ENCODE measurements at regions of chr1 and their contacts with region 1.

Region 1: DNA sequence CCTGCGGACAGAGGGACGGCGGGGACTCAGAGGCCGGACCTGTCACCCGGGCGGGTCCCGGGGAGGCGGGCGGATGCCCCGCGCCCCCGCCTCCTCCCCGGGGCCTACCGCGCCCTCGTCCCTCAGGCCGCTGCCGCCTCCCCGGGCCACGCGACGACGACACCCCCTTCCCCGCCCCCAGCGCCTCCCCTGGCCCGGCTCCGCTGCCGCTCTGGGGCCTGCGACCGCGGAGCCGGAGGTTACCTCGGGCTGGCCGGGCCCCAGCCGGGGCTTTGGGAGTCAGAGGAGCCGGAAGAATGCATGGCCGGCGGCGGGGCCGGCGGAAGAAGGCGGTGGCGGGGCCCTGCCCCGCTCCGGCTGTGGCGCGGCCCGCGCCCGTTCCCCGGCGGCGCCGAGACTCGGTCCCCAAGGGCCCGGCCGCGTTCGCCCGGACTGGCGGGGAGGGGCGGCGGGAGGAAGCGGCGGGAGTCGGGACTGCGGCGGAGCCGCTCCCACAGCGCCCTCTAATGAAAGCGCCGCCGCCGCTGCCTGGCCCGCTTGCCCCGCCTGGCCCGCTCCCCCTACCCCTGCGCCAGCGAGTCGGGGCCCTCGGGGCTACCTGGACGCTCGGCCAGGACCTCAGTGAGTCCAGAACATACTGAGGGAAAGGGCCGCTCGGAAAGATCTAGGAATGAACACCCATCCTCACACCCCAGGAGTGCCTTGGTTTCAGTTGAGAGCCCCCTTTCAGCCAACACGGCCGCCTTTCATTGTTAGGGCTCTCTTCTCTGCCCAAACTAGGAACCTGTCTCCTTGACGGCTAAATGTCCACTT is at the start of gene LPGAT1:
- DNase-seq: peak; percentile 62 to 78 (median 64)
- H3K4me3 ChIP-seq: peak within 1 kb of the TSS; percentile 43 to 69
- H3K4me3 Mint-ChIP-seq: peak within 1 kb of the TSS; percentile 90 to 95 (median 92)
- H3K27ac ChIP-seq: peak within 1 kb of the TSS; percentile 72
- H3K27ac Mint-ChIP-seq: peak within 1 kb of the TSS; percentile 86 to 96 (median 92)
- H3K4me1 ChIP-seq: peaks cover 68% of the 10 kb centered on the region
- H3K4me1 Mint-ChIP-seq: peaks cover 52 to 76% (median 59%) of the 10 kb centered on the region in 4 donors
- H3K27me3 ChIP-seq: no peaks in the 10 kb centered on the region
- H3K27me3 Mint-ChIP-seq: no peaks in the 10 kb centered on the region
- total RNA-seq, gene LPGAT1: 29.7 to 31.1 TPM

Region 2: GRCh38 chr1:211578640-211579433 is 251.7 kb before region 1 on chr1 and contains the start of gene SLC30A1:
- CTCF ChIA-PET with region 1: no interaction called
- POLR2A ChIA-PET with region 1: no interaction called
- intact Hi-C with region 1: loop called (anchors 5 kb)
- DNase-seq: peak; percentile 99
- H3K4me3 ChIP-seq: peak within 1 kb of the TSS; percentile 72 to 86
- H3K4me3 Mint-ChIP-seq: peak within 1 kb of the TSS; percentile 90 to 96 (median 92)
- H3K27ac ChIP-seq: peak within 1 kb of the TSS; percentile 76
- H3K27ac Mint-ChIP-seq: peak within 1 kb of the TSS; percentile 86 to 97 (median 93)
- H3K4me1 ChIP-seq: peaks cover 42% of the 10 kb centered on the region
- H3K4me1 Mint-ChIP-seq: peaks cover 23 to 56% (median 36%) of the 10 kb centered on the region in 4 donors
- H3K27me3 ChIP-seq: no peaks in the 10 kb centered on the region
- H3K27me3 Mint-ChIP-seq: peaks cover 0 to 2% of the 10 kb centered on the region in 2 donors
- total RNA-seq, gene SLC30A1: 10.1 to 10.6 TPM

Region 3: DNA sequence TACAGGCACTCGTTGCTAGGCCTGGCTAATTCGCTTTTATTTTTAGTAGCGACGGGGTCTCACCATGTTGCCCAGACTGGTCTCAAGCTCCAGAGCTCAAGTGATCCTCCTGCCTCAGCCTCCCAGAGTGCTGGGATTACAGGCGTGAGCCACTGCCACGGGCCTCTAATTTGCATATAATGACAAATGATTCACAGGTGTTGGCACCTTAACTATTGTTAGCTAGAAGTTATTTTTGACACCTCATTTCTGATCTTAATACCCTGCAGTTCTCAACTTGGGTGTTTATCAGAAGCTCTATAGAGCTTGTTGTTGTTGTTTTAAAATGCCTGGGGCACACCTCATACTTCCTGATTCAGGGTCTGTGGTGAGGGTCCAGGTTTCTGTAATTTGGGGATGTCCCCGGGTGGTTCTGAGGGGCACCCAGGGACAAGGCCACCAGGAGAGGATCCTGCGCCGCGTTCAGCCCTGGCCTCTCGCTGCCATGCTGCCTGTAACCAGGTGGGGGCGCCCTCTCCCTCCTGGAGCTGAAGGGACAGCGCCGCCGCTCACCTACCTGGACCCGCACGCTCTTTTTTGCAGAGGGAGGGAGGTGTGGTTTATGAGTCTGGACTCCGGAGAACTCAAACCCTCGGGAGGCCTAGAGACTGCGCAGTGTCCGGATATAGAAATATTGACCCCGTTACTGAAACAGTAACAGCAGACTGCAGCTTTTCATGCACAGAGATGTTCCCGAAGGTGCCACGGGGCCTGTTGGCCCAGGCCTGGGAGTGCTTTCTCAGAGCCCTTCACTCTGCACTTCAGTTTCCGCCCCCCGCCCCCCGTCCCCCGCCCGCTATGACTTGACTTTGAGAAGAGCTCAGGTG is 132.1 kb before region 1 on chr1:
- CTCF ChIA-PET with region 1: interaction called, 6 read pairs
- POLR2A ChIA-PET with region 1: no interaction called
- intact Hi-C with region 1: loop called (anchors 1 kb)
- DNase-seq: peak; percentile 72 to 81 (median 73)
- H3K4me3 ChIP-seq: peak overlapping the region in 1 of 2 donors; percentile 30
- H3K4me3 Mint-ChIP-seq: peak overlapping the region; percentile 66 to 82 (median 78)
- H3K27ac ChIP-seq: no peak overlapping the region
- H3K27ac Mint-ChIP-seq: no peak overlapping the region
- H3K4me1 ChIP-seq: peaks cover 21% of the 10 kb centered on the region
- H3K4me1 Mint-ChIP-seq: peaks cover 8 to 26% (median 19%) of the 10 kb centered on the region in 4 donors
- H3K27me3 ChIP-seq: no peaks in the 10 kb centered on the region
- H3K27me3 Mint-ChIP-seq: peaks cover 0 to 3% of the 10 kb centered on the region in 2 donors

Region 4: GRCh38 chr1:211842518-211842917 is 12.0 kb after region 1 on chr1:
- CTCF ChIA-PET with region 1: interaction called, 6 read pairs
- POLR2A ChIA-PET with region 1: interaction called, 7 read pairs
- intact Hi-C with region 1: loop called (anchors 1 kb)
- DNase-seq: no peak
- H3K4me3 ChIP-seq: peak overlapping the region in 1 of 2 donors; percentile 6
- H3K4me3 Mint-ChIP-seq: peak overlapping the region in 5 of 8 donors; percentile 4 to 75 (median 69)
- H3K27ac ChIP-seq: no peak overlapping the region
- H3K27ac Mint-ChIP-seq: peak overlapping the region; percentile 36 to 94 (median 70)
- H3K4me1 ChIP-seq: peaks cover 20% of the 10 kb centered on the region
- H3K4me1 Mint-ChIP-seq: peaks cover 19 to 36% (median 25%) of the 10 kb centered on the region in 4 donors
- H3K27me3 ChIP-seq: no peaks in the 10 kb centered on the region
- H3K27me3 Mint-ChIP-seq: no peaks in the 10 kb centered on the region

Region 5: DNA sequence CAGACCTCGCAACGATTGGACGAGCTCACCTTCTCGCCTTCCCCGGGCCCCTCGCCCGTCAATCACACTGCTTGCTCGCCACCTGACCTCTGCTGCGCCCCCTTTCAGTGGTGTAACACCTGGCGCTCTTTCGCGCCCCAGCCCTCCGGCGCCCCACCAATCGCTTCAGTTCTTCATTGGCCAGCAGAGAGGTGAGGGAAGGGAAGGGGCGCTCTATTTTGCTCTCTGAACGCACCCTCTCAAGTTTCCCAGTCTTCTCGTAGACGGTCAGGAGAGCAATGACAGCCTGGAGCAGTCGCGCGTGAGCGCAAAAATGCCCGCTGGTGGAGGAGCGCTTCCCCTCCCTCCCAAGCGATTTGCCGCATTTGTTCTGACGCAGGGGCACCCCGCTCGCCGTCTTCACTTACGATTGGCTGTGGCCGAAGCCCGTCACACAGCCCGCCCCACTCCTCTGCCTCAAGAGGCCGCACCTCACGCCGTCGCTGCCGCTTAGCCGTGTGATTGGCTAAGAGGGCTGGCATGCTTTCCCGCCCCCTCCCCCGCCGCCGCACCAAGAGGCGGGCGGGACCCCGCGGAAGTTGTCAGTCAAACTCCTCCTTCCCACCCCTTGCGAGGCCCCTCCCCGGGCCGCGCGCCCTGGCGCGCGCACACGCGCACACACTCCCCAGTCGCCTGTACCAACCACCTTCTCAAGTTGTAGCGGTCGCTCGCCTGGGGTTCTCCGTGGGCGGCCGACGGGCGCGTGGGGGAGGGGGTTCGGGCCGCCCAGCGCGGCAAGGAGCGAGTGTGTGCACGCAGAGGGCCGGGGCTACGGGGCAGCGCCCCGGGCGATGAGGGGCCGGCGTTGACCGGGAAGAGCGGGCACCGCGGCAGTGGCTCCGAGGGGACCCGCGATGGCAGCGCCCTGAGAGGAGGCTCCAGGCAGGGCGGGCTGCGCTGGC is 454.5 kb after region 1 on chr1 and contains the start of gene PPP2R5A:
- CTCF ChIA-PET with region 1: no interaction called
- POLR2A ChIA-PET with region 1: interaction called, 3 read pairs
- intact Hi-C with region 1: loop called (anchors 2 kb)
- DNase-seq: peak; percentile 98 to 99 (median 99)
- H3K4me3 ChIP-seq: peak within 1 kb of the TSS; percentile 85 to 99
- H3K4me3 Mint-ChIP-seq: peak within 1 kb of the TSS; percentile 99 to 100 (median 100)
- H3K27ac ChIP-seq: peak within 1 kb of the TSS; percentile 92
- H3K27ac Mint-ChIP-seq: peak within 1 kb of the TSS; percentile 94 to 99 (median 99)
- H3K4me1 ChIP-seq: peaks cover 34% of the 10 kb centered on the region
- H3K4me1 Mint-ChIP-seq: peaks cover 26 to 49% (median 37%) of the 10 kb centered on the region in 4 donors
- H3K27me3 ChIP-seq: no peaks in the 10 kb centered on the region
- H3K27me3 Mint-ChIP-seq: no peaks in the 10 kb centered on the region
- total RNA-seq, gene PPP2R5A: 53.8 to 55.0 TPM

Region 6: DNA sequence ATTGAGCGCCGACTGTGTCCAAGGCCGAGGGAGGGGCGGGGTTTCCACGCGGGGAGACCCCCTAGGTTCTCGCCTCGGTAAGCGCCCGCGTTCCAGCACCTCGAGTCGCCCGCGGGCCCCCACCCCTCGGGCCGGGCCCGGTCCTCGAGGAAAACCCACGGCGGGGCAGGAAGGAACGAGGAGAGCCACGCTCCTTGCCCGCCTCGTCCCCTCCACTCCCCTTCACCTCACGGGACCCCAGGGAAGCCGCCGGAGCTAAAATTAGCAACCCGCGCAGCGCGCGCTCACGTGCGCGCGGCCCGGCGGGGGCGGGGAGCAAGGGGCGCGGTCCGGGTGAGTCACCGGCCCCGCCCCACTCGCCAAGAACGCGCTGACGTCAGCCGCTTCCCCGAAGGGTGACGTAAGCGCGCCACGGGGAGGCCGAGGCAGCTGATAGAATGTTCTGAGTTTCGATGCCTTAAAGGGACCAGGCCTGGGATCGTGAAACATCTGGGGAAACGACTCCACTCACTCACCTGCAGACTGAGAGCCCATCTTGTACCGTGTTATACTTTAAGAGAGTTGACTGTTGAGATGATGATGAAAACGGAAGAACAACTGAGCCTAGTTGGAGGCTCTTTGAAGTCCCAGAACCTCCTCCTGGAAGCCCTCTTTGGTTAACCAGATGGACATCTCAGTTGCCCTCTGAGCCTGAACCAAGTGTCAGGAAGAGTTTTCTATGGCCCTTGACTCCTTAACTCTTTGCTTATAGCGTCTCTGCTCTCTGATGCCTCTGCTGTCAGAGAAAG is 728.4 kb after region 1 on chr1:
- CTCF ChIA-PET with region 1: no interaction called
- POLR2A ChIA-PET with region 1: no interaction called
- intact Hi-C with region 1: loop called (anchors 5 kb)
- DNase-seq: peak; percentile 90 to 92 (median 91)
- H3K4me3 ChIP-seq: peak overlapping the region in 1 of 2 donors; percentile 64
- H3K4me3 Mint-ChIP-seq: peak overlapping the region; percentile 83 to 93 (median 86)
- H3K27ac ChIP-seq: peak overlapping the region; percentile 79
- H3K27ac Mint-ChIP-seq: peak overlapping the region; percentile 81 to 100 (median 99)
- H3K4me1 ChIP-seq: peaks cover 11% of the 10 kb centered on the region
- H3K4me1 Mint-ChIP-seq: peaks cover 2 to 16% (median 8%) of the 10 kb centered on the region in 4 donors
- H3K27me3 ChIP-seq: no peaks in the 10 kb centered on the region
- H3K27me3 Mint-ChIP-seq: peaks cover 4% of the 10 kb centered on the region in 2 donors